Spleen (tissue), 13 donors: ENCODE measurements at regions of chr19 and their contacts with region 1.

Region 1: DNA sequence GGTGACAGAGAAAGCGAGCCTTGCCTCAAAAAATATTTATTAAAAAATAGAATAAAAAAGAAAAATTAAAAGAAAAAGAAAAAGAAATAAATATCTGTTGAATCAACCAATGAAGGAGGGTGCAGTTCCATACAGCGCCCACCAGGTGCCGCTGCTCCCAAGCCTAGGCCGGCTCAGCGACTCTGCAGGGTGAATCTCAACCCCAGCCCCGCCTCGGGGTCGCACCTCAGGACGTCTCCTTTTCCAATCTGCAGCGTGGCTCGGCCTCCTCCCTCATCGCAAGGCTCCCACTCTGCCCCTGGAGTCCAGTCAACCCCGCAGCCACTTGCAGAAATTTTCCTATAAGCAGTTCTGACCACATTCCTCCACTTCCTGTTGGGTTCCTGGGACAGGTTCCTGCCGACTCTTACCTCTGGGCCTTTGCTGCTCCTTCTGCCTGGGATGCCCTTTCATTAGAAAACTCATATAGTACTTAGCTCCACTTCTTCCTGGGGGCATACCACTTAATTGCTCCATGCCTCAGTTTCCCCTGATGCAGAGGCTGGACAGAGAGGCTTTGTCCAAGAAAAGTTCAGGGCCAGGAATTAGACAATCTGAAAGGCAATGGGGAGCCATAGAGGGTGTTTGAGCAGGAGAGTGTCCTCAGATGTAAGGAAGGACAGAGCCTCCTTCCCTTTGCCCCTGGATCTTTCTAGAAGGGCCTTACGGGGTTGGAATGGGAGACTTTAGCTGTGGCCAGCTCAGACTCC is 24.3 kb downstream of the NFILZ start:
- DNase-seq: peak; percentile 90
- H3K4me3 ChIP-seq: peak overlapping the region in 2 of 8 donors; percentile 24 to 53
- H3K27ac ChIP-seq: no peak overlapping the region
- H3K4me1 ChIP-seq: peaks cover 3 to 29% (median 15%) of the 10 kb centered on the region in 6 donors
- H3K27me3 ChIP-seq: peaks cover 0 to 26% (median 0%) of the 10 kb centered on the region in 7 donors
- CTCF ChIP-seq: peak; percentile 75 to 99 (median 94)
- POLR2A ChIP-seq: no peak

Region 2: DNA sequence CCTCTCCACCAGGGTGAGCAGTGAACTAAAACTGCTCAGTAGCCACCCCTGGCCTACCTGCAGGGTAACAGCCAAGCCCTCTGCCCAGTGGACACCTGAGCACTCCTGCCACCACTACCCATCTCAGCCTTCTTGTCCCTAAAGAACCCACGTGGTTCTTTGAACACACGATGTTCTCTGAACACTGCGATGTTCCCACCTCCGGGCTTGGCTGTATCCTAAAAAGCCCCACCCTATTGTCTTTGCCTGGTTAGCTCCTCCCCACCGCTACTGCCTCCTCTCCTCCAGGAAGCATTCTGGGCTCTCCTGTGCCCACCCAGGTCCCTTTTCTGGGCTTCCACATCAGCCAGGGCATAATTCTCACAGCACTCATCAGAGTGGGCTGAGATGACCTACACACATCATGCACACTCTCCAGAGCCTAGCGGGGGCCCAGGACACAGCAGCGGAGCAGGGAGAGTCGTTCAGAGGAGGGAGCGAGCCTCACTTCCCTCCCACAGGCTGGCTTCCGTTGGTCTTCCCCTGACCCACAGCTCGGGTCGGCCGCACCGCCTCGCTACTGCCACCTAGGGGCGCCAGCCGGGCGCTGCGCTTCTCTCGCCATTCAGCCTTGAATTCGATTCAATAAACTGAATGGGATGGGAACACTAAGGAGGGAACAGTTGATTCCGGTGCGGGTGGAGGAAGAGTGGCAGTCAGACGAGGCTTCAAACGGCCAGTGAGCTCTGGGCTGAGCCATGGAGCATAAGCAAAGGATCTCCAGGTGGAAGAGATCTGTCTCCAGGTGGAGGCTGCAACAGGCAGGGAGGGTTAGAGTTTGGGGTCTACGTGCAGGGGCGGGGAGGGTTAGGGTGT is 652.5 kb before region 1 on chr19:
- intact Hi-C with region 1: no loop called
- DNase-seq: peak; percentile 97
- H3K4me3 ChIP-seq: peak overlapping the region; percentile 20 to 59 (median 30)
- H3K27ac ChIP-seq: peak overlapping the region; percentile 61 to 84 (median 74)
- H3K4me1 ChIP-seq: peaks cover 40 to 89% (median 74%) of the 10 kb centered on the region in 6 donors
- H3K27me3 ChIP-seq: no peaks in the 10 kb centered on the region
- CTCF ChIP-seq: peak; percentile 89 to 99 (median 97)
- POLR2A ChIP-seq: no peak

Region 3: DNA sequence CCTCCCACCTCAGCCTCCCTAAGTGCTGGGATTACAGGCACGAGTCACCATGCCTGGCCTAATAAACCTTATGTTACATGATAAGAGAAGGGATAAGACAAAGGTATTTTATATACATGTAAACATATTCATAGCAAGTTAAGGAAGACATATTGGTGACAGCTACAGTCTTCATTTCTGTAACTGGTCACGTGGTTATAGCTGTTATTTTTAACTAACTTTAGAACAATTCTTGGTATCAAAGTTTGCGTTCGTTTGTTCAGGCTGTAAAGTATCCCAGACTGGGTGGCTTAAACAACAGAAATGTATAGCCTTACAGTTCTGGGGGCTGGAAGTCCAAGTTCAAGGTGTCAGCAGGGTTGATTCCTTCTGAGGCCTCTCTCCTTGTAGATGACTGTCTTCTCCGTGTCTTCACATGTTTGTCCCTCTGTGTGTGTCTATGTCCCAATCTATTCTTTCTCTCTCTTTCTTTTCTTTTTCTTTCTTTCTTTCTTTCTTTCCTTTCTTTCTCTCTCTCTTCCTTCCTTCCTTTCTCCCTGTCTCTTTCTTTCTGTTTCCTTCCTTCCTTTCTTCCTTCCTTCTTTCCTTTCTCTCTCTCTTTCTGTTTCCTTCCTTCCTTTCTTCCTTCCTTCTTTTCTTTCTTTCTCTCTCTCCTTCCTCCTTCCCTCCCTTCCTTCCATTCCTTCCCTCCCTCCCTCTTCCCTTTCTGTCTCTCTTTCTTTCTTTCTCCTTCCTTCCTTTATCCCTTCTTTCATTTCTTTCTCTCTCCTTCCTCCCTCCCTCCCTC is 36.2 kb after region 1 on chr19:
- intact Hi-C with region 1: loop called (anchors 5 kb)
- DNase-seq: no peak
- H3K4me3 ChIP-seq: no peak overlapping the region
- H3K27ac ChIP-seq: no peak overlapping the region
- H3K4me1 ChIP-seq: no peaks in the 10 kb centered on the region
- H3K27me3 ChIP-seq: peaks cover 0 to 59% (median 4%) of the 10 kb centered on the region in 7 donors
- CTCF ChIP-seq: no peak
- POLR2A ChIP-seq: no peak

Region 4: GRCh38 chr19:9075064-9075949 is 420.5 kb after region 1 on chr19:
- intact Hi-C with region 1: loop called (anchors 5 kb)
- DNase-seq: no peak
- H3K4me3 ChIP-seq: no peak overlapping the region
- H3K27ac ChIP-seq: no peak overlapping the region
- H3K4me1 ChIP-seq: peaks cover 0 to 5% (median 0%) of the 10 kb centered on the region in 6 donors
- H3K27me3 ChIP-seq: no peaks in the 10 kb centered on the region
- CTCF ChIP-seq: no peak
- POLR2A ChIP-seq: no peak